Sigmoid colon (tissue), 7 donors: ENCODE measurements at regions of chr3 and their contacts with region 1.

Region 1: GRCh38 chr3:27312044-27312668 is 57.0 kb downstream of the NEK10 start:
- DNase-seq: no peak
- H3K4me3 ChIP-seq: no peak overlapping the region
- H3K27ac ChIP-seq: no peak overlapping the region
- H3K4me1 ChIP-seq: peaks cover 0 to 39% (median 10%) of the 10 kb centered on the region in 4 donors
- H3K27me3 ChIP-seq: no peaks in the 10 kb centered on the region
- CTCF ChIP-seq: peak; percentile 67 to 85 (median 81)
- EP300 ChIP-seq: no peak
- POLR2A ChIP-seq: no peak

Region 2: DNA sequence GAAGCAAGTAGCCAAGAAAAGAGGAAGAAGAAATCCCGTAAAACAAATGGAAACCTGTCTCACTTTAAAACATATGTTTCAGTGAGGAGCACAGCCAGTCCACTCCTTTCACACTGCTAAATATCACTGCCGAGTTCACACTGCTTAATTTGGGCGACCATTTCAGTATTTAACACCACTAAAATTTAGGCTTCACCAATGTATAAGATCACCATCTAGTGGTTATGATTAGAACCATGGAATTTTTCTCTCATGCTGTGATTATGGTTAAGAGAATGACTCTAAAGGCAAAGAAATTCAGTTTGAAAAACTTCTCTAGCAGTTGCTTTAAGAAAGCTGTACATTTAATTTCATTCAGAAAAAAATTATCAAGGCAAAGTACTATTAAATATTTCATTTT is 155.4 kb after region 1 on chr3:
- intact Hi-C with region 1: loop called (anchors 2 kb)
- DNase-seq: no peak
- H3K4me3 ChIP-seq: no peak overlapping the region
- H3K27ac ChIP-seq: peak overlapping the region in 3 of 4 donors; percentile 56 to 64 (median 61)
- H3K4me1 ChIP-seq: peaks cover 0 to 30% (median 22%) of the 10 kb centered on the region in 4 donors
- H3K27me3 ChIP-seq: no peaks in the 10 kb centered on the region
- CTCF ChIP-seq: peak; percentile 41 to 57 (median 50)
- EP300 ChIP-seq: no peak
- POLR2A ChIP-seq: no peak

Region 3: GRCh38 chr3:27681245-27681748 is 369.1 kb after region 1 on chr3:
- intact Hi-C with region 1: loop called (anchors 2 kb)
- DNase-seq: no peak
- H3K4me3 ChIP-seq: peak overlapping the region in 3 of 4 donors; percentile 16 to 21 (median 17)
- H3K27ac ChIP-seq: peak overlapping the region in 3 of 4 donors; percentile 10 to 50 (median 47)
- H3K4me1 ChIP-seq: peaks cover 0 to 19% (median 15%) of the 10 kb centered on the region in 4 donors
- H3K27me3 ChIP-seq: no peaks in the 10 kb centered on the region
- CTCF ChIP-seq: peak; percentile 37 to 63 (median 54)
- EP300 ChIP-seq: peak in 1 of 4 donors; percentile 25
- POLR2A ChIP-seq: no peak

Region 4: DNA sequence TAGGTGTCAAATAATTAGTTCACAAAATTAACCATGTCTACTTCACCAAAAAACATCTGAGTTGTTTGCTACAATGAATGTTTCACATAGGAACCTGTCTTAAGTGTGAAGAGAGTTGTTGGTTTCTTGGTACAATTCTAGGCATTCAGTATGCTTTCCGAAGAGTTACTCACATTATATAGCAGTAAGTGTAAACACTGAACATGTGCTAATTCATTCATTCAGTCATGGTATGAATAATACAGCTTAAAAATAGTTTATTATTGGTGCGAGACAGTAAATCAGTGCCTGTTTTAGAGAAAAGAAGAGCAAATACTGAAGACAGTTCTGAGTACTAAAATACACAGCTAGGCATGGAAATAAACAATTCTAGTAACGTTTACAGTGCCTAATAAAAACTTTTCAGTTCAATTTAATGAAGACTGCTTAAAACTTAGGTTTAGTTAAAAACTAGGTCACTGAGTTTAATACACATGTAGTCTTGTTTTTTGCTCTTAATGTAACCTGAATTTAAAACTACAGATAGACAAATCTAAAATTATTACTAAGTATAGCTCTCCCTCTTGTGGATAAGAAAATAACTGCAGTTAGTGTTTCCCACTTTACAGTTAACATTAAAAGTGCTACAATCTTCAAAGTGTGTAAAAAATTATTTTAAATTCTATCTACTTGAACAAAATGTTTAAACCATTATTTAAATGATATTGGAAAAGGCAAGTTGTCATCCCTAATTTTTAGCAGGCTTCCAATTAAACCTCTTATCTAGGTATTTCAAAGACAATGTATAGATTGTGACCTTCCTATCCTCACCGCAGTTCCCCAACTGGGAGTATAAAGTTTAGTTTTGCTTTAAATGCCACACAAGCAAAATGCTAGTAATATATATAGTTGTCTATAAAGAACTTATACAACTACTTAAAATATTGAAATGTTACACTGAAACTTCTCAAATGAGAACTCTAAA is 1016.3 kb after region 1 on chr3:
- intact Hi-C with region 1: loop called (anchors 10 kb)
- DNase-seq: no peak
- H3K4me3 ChIP-seq: no peak overlapping the region
- H3K27ac ChIP-seq: no peak overlapping the region
- H3K4me1 ChIP-seq: peaks cover 0 to 4% (median 0%) of the 10 kb centered on the region in 4 donors
- H3K27me3 ChIP-seq: no peaks in the 10 kb centered on the region
- CTCF ChIP-seq: peak; percentile 32 to 72 (median 52)
- EP300 ChIP-seq: no peak
- POLR2A ChIP-seq: no peak